ENCODE measurements at regions of chr11 and their contacts with region 1.

Region 1: GRCh38 chr11:14148653-14149273 is 186.2 kb downstream of the SPON1 start:
- DNase-seq: no peak
- H3K4me3 ChIP-seq: no peak overlapping the region
- H3K27ac ChIP-seq: no peak overlapping the region
- H3K4me1 ChIP-seq: no peaks in the 10 kb centered on the region
- H3K27me3 ChIP-seq: no peaks in the 10 kb centered on the region
- CTCF ChIP-seq: peak in 2 of 3 experiments; percentile 8 to 38; a peak in 2 of 4 replicates
- EP300 ChIP-seq: no peak
- POLR2A ChIP-seq: no peak
- RAD21 ChIP-seq: peak; percentile 24 to 27; a peak in 2 of 4 replicates

Region 2: DNA sequence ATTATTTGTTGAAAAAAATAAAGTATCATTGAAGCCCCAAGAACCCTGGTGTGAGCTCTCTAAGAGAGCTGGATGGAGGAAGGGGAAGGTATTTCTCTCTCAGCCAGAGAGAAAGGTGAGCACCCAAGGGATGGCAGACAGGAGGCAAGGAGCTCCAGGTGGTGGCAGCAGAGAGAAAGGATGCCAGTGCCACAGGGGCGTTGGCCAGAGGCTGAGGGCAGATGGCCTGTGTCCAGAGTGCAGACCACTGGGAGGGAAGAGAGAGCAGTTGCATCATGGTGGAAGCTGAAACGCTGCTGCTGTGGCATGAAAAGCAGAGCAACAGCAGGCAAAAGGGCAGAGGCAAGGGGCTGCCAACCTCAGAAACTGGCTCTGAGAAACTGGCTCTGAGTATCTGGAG is 177.8 kb before region 1 on chr11:
- CTCF ChIA-PET with region 1: interaction called, 12 read pairs
- POLR2A ChIA-PET with region 1: no interaction called
- DNase-seq: peak in 1 of 2 experiments; percentile 53
- H3K4me3 ChIP-seq: no peak overlapping the region
- H3K27ac ChIP-seq: no peak overlapping the region
- H3K4me1 ChIP-seq: peaks cover 3 to 7% (median 5%) of the 10 kb centered on the region in 4 experiments; a peak in 5 of 7 replicates
- H3K27me3 ChIP-seq: peaks cover 0 to 6% (median 0%) of the 10 kb centered on the region in 4 experiments; a peak in 2 of 7 replicates
- CTCF ChIP-seq: peak; percentile 68 to 73 (median 73)
- EP300 ChIP-seq: no peak
- POLR2A ChIP-seq: no peak
- RAD21 ChIP-seq: peak; percentile 73 to 75

Region 3: DNA sequence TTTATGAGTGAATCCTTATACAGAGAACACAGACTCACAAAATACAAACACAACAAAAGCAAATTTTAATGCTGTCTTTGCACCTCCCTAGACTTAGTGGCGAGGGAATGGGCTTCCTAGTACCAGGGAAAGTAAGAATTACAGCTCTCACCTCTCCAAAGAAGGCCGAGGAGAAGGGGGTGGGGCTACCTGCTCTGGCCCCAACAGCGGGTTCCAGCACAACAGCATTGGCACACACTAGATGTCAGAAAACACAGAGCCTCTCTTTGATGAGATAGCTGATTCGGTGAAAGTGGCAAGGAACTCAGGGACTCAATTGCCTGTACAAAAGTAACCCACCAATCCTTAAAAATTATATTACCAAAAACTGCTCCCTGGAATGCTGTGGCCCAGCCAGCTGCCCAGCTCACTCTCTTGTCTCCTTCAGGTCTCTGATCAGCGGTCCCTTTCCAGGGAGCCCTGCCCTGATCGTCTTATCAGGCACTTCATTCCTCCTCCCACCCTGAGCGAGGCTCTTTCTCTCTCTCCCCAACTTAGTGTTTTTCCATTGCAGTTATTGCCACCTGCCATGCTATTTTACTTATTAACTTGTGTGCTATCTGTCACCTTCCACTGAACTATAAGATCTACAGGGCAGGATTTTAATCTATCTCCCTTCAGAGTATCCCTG is 155.5 kb before region 1 on chr11:
- CTCF ChIA-PET with region 1: no interaction called
- POLR2A ChIA-PET with region 1: no interaction called
- DNase-seq: no peak
- H3K4me3 ChIP-seq: no peak overlapping the region
- H3K27ac ChIP-seq: no peak overlapping the region
- H3K4me1 ChIP-seq: no peaks in the 10 kb centered on the region
- H3K27me3 ChIP-seq: no peaks in the 10 kb centered on the region
- CTCF ChIP-seq: no peak
- EP300 ChIP-seq: no peak
- POLR2A ChIP-seq: no peak
- RAD21 ChIP-seq: no peak

Region 4: GRCh38 chr11:14193644-14194043 is 44.9 kb after region 1 on chr11:
- CTCF ChIA-PET with region 1: interaction called, 11 read pairs
- POLR2A ChIA-PET with region 1: no interaction called
- DNase-seq: no peak
- H3K4me3 ChIP-seq: no peak overlapping the region
- H3K27ac ChIP-seq: no peak overlapping the region
- H3K4me1 ChIP-seq: peaks cover 0 to 3% (median 0%) of the 10 kb centered on the region in 4 experiments; a peak in 2 of 7 replicates
- H3K27me3 ChIP-seq: no peaks in the 10 kb centered on the region
- CTCF ChIP-seq: no peak
- EP300 ChIP-seq: no peak
- POLR2A ChIP-seq: no peak
- RAD21 ChIP-seq: no peak

Region 5: DNA sequence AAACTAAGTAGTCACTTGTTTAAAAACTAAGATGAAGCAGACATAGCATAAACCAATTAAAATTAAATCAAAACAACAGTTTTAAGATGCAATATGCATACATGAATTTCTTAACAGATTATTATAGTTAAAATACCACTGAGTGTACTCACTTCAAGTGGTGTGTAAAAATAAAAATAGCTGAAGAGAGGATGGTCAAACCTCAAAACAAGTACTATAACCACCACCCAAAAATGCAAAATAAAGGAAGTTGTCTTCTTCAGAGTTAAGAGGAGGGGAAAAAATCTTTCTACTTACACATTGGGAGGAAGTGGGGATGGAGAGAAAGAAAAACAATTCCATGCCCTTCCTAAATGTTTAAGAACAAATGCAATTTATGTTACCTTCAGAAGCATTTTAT is 178.4 kb after region 1 on chr11:
- CTCF ChIA-PET with region 1: no interaction called
- POLR2A ChIA-PET with region 1: no interaction called
- DNase-seq: no peak
- H3K4me3 ChIP-seq: no peak overlapping the region
- H3K27ac ChIP-seq: no peak overlapping the region
- H3K4me1 ChIP-seq: peaks cover 0 to 16% (median 3%) of the 10 kb centered on the region in 4 experiments; a peak in 4 of 7 replicates
- H3K27me3 ChIP-seq: no peaks in the 10 kb centered on the region
- CTCF ChIP-seq: no peak
- EP300 ChIP-seq: no peak
- POLR2A ChIP-seq: no peak
- RAD21 ChIP-seq: no peak